ENCODE measurements at regions of chr6 and their contacts with region 1.

Region 1: GRCh38 chr6:116016846-116017545 is 43.7 kb downstream of the FRK start:
- DNase-seq: no peak
- H3K4me3 ChIP-seq: no peak overlapping the region
- H3K4me3 Mint-ChIP-seq: no peak overlapping the region
- H3K27ac Mint-ChIP-seq: peak overlapping the region; percentile 65
- H3K4me1 ChIP-seq: peaks cover 27% of the 10 kb centered on the region
- H3K4me1 Mint-ChIP-seq: peaks cover 32% of the 10 kb centered on the region
- H3K27me3 ChIP-seq: no peaks in the 10 kb centered on the region
- H3K27me3 Mint-ChIP-seq: no peaks in the 10 kb centered on the region
- CTCF ChIP-seq: no peak

Region 2: DNA sequence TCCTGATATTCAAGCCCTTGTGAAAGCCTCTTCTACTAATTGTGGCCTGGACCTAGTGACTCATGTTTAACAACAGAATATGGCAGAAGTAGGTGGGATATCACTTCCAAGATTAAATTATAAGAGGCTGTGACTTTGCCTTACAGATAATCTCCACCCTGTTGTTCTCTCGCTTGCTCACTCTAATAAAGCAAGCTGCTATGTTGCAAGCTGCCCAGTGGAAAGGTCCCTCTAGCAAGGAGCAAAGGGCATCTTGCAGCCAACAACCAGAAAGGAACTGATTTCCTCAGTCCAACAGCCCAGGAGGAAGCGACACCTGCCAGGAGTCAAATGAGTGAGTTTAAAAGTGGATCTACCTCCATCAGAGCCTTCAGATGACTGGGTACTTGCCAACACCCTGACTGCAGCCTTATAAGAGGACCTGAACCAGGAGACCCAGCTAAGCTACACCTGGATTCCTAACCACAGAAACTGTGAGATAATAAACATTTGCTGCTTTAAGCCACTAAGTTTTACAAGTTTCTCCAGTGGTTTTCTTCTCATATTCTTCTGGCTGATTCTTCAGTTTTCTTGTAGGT is 68.9 kb before region 1 on chr6:
- CTCF ChIA-PET with region 1: no interaction called
- POLR2A ChIA-PET with region 1: no interaction called
- intact Hi-C with region 1: no loop called
- DNase-seq: peak in 1 of 2 experiments; percentile 7
- H3K4me3 ChIP-seq: no peak overlapping the region
- H3K4me3 Mint-ChIP-seq: no peak overlapping the region
- H3K27ac Mint-ChIP-seq: no peak overlapping the region
- H3K4me1 ChIP-seq: peaks cover 9% of the 10 kb centered on the region; the same call in 1 of the 2 replicates
- H3K4me1 Mint-ChIP-seq: peaks cover 8% of the 10 kb centered on the region
- H3K27me3 ChIP-seq: no peaks in the 10 kb centered on the region
- H3K27me3 Mint-ChIP-seq: no peaks in the 10 kb centered on the region
- CTCF ChIP-seq: no peak

Region 3: GRCh38 chr6:116034327-116034726 is 17.3 kb after region 1 on chr6:
- CTCF ChIA-PET with region 1: no interaction called
- POLR2A ChIA-PET with region 1: no interaction called
- intact Hi-C with region 1: loop called (anchors 1 kb)
- DNase-seq: no peak
- H3K4me3 ChIP-seq: no peak overlapping the region
- H3K4me3 Mint-ChIP-seq: no peak overlapping the region
- H3K27ac Mint-ChIP-seq: peak overlapping the region; percentile 40
- H3K4me1 ChIP-seq: peaks cover 41% of the 10 kb centered on the region
- H3K4me1 Mint-ChIP-seq: peaks cover 23% of the 10 kb centered on the region
- H3K27me3 ChIP-seq: no peaks in the 10 kb centered on the region
- H3K27me3 Mint-ChIP-seq: no peaks in the 10 kb centered on the region
- CTCF ChIP-seq: no peak

Measured in Caco-2 (cell line).